ENCODE measurements at regions of chr7 and their contacts with region 1.

Region 1: DNA sequence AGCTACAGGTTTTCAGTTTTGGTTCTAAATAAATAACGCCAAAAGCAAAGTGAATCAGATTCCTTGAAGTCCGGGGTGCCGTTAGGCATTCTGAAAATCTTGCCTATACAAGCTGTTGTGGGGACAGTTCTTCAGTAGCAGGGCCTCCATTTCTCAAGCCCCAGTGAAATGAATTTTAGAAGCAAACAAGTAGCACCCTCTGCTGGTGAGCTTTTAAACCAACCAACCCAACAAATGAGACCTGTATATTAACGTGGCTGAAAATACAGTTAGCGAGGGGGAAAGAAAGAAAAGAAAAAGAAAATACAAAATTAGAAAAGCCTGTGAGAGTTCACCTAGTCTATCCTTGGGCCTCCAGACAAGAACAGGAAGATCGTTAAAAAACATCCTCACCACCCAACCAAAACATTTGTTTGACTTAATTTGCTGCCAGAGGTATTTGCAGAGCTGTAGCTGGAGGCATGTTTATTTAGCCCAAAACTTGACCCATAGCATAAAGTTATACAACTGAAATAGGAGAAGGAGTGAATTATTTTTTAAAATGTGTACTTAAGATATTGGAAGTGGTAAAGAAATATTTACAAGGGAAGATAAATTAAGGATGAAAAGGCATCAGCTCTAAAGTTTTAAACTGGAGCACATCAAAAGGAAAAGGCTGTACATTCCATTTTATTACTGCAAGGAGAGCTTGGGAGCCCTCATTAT is 98.9 kb downstream of the DYNC1I1 start:
- DNase-seq: no peak
- ATAC-seq: peak; percentile 74

Region 2: DNA sequence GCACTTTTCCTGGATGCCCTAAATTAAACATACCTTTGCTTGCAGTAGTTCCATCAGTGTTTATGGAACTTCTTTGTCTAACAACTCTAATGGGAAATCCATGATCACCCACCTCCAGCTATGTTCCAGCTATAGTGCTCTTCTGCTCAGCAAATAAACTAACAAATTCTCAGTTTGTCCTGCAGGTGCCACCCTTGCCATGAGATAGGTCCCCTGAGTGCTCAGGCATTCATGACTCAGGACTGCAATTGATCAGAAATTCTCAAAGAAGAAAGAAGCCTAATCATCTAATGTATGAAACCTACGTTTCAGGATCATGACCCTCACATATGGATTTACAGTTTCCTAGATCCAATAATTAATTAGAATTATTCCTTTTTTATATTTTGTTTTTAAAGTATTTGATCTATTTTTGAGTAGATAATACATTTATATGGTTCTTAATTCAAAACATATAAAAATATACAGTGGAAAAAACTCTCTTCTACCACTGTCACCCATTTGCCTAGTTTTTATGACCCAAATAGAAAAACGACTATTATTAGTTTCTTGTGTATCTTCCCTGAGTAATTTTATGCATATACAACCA is 147.5 kb before region 1 on chr7:
- intact Hi-C with region 1: loop called (anchors 5 kb)
- DNase-seq: no peak
- ATAC-seq: peak; percentile 81

Region 3: DNA sequence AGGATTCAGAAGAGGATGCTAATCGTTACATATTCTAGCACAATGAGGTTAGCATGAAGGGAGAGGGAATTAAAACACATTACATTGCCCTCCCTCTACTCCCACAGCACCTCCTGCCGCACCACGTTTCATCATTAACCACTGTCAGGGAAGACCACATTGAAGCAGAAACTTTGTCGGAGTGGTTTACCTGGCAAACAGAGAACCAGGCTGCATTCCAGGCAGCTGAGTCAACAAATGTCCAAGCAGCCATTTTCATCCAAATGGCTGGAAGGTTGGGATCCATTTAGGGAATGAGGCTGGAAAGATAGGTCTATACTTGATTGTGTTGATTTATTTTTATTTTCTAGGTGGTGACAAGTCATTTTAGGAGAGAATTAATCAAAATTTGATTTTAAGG is 174.7 kb after region 1 on chr7:
- intact Hi-C with region 1: no loop called
- DNase-seq: no peak
- ATAC-seq: no peak

Measured in left ventricle myocardium superior (tissue), 1 donor.